ENCODE measurements at regions of chr12 and their contacts with region 1.

Region 1: DNA sequence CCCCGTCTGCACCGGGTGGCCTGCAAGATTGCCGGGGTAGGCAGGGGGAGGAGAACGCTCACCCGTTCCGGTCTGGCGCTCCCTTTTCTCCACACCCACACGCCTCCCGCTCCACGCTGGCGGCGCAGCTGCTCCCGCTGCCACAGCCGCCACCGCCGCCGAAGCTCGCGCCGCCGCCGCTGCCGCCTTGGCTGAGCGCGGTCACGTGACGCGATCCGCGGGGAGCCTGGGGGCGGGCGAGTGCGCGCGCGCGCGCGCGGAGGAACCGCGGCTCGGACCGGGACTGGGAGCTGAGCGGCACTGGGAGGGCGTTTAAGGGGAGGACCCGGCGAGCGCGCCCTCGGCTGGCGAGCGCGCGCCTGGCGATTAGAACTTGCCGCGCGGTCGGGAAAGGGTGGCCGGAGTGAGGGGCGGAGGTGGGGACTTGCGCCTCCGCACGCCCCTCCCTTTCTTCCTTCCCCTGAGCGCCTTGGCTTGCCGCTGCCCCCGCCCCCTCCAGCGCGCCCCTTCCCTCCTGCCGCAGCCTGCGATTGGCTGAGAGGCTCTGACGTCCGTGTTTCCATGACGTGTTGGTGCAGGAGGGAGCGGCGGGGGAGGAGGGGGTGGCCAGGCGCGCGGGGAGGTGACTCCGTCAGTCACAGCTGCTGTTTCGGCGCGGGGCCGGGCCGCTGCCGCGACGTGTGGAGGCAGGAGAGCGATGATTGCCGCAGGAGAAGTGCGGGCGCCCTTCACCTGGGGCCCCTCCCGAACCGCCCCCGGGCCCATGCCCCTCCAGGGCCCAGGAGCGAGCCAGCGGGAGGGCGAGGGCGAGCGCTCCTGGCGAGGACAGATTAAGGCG is 738 bp upstream of the ATP2B1 start:
- DNase-seq: peak; percentile 99
- ATAC-seq: peak; percentile 80
- H3K4me3 Mint-ChIP-seq: peak overlapping the region; percentile 83
- H3K27ac Mint-ChIP-seq: peak overlapping the region; percentile 84
- H3K4me1 Mint-ChIP-seq: peaks cover 27% of the 10 kb centered on the region
- H3K27me3 Mint-ChIP-seq: peaks cover 3% of the 10 kb centered on the region

Region 2: DNA sequence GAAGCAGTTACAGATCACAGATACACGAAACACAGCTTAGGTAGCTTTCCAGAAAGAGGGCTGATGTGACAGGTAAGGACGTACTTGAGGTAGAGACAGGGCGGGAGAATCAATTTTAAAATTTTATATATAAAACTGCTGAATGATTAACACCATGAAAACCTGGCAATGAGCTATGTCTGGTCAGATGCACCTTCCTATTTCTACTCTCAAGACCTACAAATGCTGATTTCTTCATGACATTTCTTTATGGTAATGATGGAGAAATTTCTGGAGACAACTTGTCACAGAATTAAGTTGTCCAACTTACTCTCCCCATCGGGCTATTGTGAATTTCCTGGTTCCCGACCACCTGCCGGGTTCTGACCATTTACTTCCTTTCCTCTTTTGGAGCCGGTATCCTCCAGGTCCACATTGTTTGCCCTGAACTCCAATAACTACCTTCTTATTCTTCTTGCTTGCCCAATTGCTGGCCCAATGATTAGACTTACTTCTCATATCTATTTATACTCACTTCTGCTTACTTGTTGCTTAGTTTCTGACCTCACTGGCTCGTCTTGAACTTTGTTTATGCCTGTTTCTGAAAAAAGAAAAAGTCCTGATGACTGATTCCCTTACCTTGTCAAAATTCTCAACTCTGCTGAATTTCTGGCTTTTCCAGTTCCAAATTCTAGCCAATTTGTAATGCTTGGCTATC is 12.1 kb after region 1 on chr12:
- CTCF ChIA-PET with region 1: no interaction called
- DNase-seq: no peak
- ATAC-seq: no peak
- H3K4me3 Mint-ChIP-seq: no peak overlapping the region
- H3K27ac Mint-ChIP-seq: no peak overlapping the region
- H3K4me1 Mint-ChIP-seq: no peaks in the 10 kb centered on the region
- H3K27me3 Mint-ChIP-seq: no peaks in the 10 kb centered on the region

Region 3: DNA sequence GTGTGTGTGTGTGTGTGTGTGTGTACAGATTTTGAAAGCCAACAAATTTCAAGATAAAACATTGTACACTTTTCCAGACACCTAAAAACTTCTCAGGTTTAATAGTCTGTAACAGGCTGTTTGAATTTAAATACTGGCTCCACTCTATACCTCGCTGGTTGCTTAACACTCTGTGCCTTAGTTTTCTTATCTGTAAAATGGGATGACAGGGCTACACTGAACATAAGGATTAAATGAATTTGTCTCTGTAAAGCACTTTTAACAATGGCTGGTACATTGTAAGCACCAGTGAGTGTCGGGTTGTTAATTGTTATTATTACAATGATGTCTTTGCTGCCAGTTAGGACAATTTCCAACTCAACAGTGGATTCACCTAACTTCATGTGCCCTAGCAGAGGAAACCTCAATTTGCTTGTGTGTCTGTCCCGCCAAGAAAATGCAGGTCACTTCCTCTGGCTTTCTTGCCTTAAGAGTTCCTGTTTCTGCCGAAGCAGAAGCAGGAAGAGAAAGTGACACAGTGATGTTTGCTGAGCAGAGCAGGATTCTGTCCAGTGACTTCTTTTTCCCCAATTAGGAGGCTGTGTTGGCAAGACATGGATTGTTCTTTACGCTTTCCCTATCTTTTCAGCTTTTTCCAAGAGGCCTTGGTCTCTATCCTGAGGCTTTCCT is 153.3 kb after region 1 on chr12:
- CTCF ChIA-PET with region 1: interaction called, 11 read pairs
- DNase-seq: peak; percentile 68
- ATAC-seq: peak; percentile 59
- H3K4me3 Mint-ChIP-seq: peak overlapping the region; percentile 73
- H3K27ac Mint-ChIP-seq: peak overlapping the region; percentile 94
- H3K4me1 Mint-ChIP-seq: peaks cover 37% of the 10 kb centered on the region
- H3K27me3 Mint-ChIP-seq: no peaks in the 10 kb centered on the region

Region 4: GRCh38 chr12:89935825-89936224 is 226.4 kb after region 1 on chr12:
- CTCF ChIA-PET with region 1: no interaction called
- DNase-seq: no peak
- ATAC-seq: peak; percentile 49
- H3K4me3 Mint-ChIP-seq: no peak overlapping the region
- H3K27ac Mint-ChIP-seq: no peak overlapping the region
- H3K4me1 Mint-ChIP-seq: peaks cover 20% of the 10 kb centered on the region
- H3K27me3 Mint-ChIP-seq: no peaks in the 10 kb centered on the region

Measured in activated CD8-positive, alpha-beta memory T cell treated with anti-CD3 and anti-CD28 coated beads, Interleukin-2, amount 10 ng/mL, durations not matched to agents 7 days and 5 days (primary cell).